ENCODE measurements at regions of chr4 and their contacts with region 1.

Region 1: DNA sequence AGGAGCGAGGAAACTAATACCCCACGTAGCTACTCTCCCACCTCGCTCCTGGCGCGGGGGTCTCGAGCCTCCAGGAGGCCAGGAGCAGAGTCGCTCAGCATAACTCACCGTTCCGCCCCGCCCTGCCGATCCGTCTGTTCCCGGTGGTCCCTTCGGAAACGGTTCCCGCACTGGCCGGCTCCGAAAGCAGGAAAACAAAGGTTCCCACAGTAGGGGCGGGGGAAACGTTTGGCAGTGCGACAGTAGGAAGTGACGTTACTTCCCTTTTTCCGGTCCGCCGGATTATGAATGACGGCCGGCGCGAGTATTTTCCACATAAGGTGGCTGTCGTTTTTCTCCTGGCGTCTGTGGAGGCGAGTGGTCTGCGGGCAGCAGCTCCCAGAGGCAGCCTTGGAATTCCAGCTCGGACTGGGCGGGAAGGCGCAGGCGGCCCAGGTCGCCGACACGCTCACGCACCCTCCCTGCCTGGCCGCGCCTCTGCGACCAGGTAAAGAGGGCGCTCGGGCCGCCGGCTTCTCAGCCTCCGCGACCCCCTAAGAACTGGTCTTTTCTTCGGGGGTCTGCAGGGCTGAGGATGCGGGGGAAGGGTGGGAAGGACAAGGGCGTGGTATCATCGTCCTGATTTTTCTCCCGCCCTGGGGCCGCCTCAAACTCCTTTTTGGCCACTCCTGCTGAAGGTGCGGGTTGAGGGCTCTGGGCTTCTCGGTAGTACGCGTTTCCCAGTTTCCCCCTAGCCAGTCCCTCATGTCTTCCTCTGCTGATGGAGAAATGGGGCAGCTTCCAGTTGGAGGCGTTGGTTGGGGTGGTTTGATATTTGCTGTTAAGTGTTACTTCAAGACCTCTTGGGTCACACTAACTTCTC is at the starts of genes GSTCD and INTS12:
- DNase-seq: peak; percentile 94
- ATAC-seq: peak; percentile 94
- H3K4me3 ChIP-seq: peak within 1 kb of the TSS; percentile 80 to 99 (median 90)
- H3K4me3 Mint-ChIP-seq: peak within 1 kb of the TSS; percentile 100
- H3K27ac ChIP-seq: peak within 1 kb of the TSS; percentile 81 to 92
- H3K27ac Mint-ChIP-seq: peak within 1 kb of the TSS; percentile 98
- H3K4me1 ChIP-seq: peaks cover 14 to 19% of the 10 kb centered on the region in 2 donors
- H3K4me1 Mint-ChIP-seq: peaks cover 38% of the 10 kb centered on the region
- H3K27me3 ChIP-seq: no peaks in the 10 kb centered on the region
- H3K27me3 Mint-ChIP-seq: no peaks in the 10 kb centered on the region
- CTCF ChIP-seq: no peak
- total RNA-seq, gene GSTCD: 12.8 and 13.2 TPM in 2 replicates
- total RNA-seq, gene INTS12: 18.4 and 19.1 TPM in 2 replicates

Region 2: GRCh38 chr4:104743215-104743653 is 965.5 kb before region 1 on chr4:
- CTCF ChIA-PET with region 1: no interaction called
- POLR2A ChIA-PET with region 1: no interaction called
- intact Hi-C with region 1: loop called (anchors 5 kb)
- DNase-seq: peak; percentile 71
- ATAC-seq: peak; percentile 91
- H3K4me3 ChIP-seq: peak overlapping the region in 1 of 5 experiments; percentile 50
- H3K4me3 Mint-ChIP-seq: peak overlapping the region; percentile 62
- H3K27ac ChIP-seq: peak overlapping the region; percentile 56 to 63
- H3K27ac Mint-ChIP-seq: peak overlapping the region; percentile 82
- H3K4me1 ChIP-seq: peaks cover 16 to 19% of the 10 kb centered on the region in 2 donors
- H3K4me1 Mint-ChIP-seq: peaks cover 21% of the 10 kb centered on the region
- H3K27me3 ChIP-seq: no peaks in the 10 kb centered on the region
- H3K27me3 Mint-ChIP-seq: no peaks in the 10 kb centered on the region
- CTCF ChIP-seq: no peak

Region 3: DNA sequence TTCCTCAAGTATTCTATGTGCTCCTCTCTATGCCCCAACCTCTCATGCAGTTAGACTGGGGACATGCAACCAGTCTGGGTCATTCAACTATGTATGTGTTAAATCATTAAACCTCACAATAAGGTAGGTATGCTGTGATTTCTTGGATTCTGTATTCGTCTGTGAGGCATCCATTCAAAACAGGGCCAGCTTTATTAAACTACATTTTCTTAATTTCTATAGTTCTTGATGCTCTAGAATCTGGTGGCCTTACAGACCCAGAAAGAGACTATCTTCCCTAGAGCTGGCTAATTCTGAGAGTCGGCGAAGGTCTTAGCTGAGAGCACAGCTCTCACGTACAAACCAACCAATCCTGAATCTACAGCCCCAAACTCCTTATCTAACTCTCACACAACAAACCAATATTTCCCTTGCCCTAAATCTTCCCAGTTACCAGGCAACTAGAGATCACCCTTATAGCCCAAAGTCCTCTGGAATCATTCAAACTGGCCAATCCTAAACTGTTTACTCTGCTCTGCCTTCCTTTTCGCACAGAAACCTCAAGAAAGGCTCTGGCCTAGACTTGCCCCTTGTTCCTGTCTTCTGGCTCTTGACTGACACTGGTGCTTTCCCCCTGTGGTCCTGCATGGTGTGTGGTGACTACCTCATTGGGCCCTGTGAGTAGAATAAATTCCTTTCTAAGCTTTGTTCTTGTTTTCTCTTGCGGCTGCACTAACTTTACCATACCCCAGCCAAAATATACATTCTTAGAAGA is 765.6 kb before region 1 on chr4:
- CTCF ChIA-PET with region 1: no interaction called
- POLR2A ChIA-PET with region 1: interaction called, 11 read pairs
- intact Hi-C with region 1: no loop called
- DNase-seq: no peak
- ATAC-seq: no peak
- H3K4me3 ChIP-seq: no peak overlapping the region
- H3K4me3 Mint-ChIP-seq: no peak overlapping the region
- H3K27ac ChIP-seq: no peak overlapping the region
- H3K27ac Mint-ChIP-seq: no peak overlapping the region
- H3K4me1 ChIP-seq: no peaks in the 10 kb centered on the region
- H3K4me1 Mint-ChIP-seq: no peaks in the 10 kb centered on the region
- H3K27me3 ChIP-seq: no peaks in the 10 kb centered on the region
- H3K27me3 Mint-ChIP-seq: no peaks in the 10 kb centered on the region
- CTCF ChIP-seq: no peak

Region 4: DNA sequence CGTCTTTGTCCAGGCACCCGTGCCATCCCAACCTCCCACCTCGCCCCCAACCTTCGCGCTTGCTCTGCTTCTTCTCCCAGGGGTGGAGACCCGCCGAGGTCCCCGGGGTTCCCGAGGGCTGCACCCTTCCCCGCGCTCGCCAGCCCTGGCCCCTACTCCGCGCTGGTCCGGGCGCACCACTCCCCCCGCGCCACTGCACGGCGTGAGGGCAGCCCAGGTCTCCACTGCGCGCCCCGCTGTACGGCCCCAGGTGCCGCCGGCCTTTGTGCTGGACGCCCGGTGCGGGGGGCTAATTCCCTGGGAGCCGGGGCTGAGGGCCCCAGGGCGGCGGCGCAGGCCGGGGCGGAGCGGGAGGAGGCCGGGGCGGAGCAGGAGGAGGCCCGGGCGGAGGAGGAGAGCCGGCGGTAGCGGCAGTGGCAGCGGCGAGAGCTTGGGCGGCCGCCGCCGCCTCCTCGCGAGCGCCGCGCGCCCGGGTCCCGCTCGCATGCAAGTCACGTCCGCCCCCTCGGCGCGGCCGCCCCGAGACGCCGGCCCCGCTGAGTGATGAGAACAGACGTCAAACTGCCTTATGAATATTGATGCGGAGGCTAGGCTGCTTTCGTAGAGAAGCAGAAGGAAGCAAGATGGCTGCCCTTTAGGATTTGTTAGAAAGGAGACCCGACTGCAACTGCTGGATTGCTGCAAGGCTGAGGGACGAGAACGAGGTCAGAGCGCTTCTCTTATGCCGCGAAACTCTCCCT is 562.3 kb before region 1 on chr4 and contains the start of gene TET2:
- CTCF ChIA-PET with region 1: no interaction called
- POLR2A ChIA-PET with region 1: no interaction called
- intact Hi-C with region 1: loop called (anchors 1 kb)
- DNase-seq: peak; percentile 90
- ATAC-seq: peak; percentile 86
- H3K4me3 ChIP-seq: peak within 1 kb of the TSS; percentile 81 to 95 (median 92)
- H3K4me3 Mint-ChIP-seq: peak within 1 kb of the TSS; percentile 97
- H3K27ac ChIP-seq: peak within 1 kb of the TSS; percentile 87 to 89
- H3K27ac Mint-ChIP-seq: peak within 1 kb of the TSS; percentile 98
- H3K4me1 ChIP-seq: peaks cover 14 to 17% of the 10 kb centered on the region in 2 donors
- H3K4me1 Mint-ChIP-seq: peaks cover 39% of the 10 kb centered on the region
- H3K27me3 ChIP-seq: no peaks in the 10 kb centered on the region
- H3K27me3 Mint-ChIP-seq: no peaks in the 10 kb centered on the region
- CTCF ChIP-seq: no peak
- total RNA-seq, gene TET2: 51.1 and 56.8 TPM in 2 replicates

Measured in B cell (primary cell).